ENCODE measurements at regions of chr12 and their contacts with region 1.

Region 1: GRCh38 chr12:53219968-53220800 is 11.8 kb downstream of the RARG start:
- DNase-seq: peak in 4 of 5 donors; percentile 54 to 74 (median 68)
- H3K4me3 ChIP-seq: peak overlapping the region; percentile 79
- H3K27ac ChIP-seq: peak overlapping the region; percentile 83 to 99
- H3K4me1 ChIP-seq: peaks cover 21% of the 10 kb centered on the region
- H3K27me3 ChIP-seq: no peaks in the 10 kb centered on the region
- CTCF ChIP-seq: no peak
- EP300 ChIP-seq: no peak
- POLR2A ChIP-seq: no peak

Region 2: DNA sequence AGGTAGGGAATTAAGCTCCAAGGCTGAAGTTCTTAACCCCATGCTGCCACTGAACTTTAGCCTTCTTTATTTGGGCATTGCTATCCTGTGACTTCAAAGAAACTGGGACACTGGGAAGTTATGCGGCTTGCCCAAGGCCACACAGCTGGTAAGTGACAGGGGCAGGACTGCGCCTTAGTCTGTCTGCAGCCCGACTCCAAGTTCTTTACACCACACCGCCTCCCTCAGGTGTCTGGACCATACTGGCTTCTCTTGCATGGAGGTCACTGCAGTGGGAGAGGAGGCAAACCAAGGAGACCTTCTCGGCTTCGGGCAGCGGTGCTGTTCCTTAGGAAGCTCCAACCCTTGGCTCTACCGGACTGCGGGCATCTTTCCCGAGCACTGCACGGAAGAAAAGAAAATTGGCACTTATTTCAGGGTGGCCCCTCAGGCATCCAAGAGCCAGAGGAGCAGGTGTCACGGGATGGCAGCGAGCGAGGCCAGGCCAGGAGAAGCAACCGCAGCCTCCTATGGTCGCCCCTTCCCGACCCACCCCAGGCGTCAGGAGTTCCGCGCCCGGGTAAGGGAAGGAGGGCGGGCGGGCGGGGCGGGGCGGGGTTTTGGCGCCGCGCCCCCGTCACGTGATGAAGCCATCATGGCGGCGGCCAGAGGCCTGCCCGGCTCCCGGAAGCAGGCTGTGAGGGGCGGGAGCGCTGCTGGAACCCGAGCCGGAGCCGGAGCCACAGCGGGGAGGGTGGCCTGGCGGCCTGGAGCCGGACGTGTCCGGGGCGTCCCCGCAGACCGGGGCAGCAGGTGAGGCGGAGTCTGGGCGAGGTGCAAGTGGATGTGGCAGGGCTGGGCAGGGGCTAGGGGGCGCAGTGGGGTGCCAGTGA is 31.5 kb after region 1 on chr12:
- intact Hi-C with region 1: loop called in 1 of 4 experiments (anchors 5 kb)
- DNase-seq: peak; percentile 73 to 87 (median 83)
- H3K4me3 ChIP-seq: peak overlapping the region; percentile 76
- H3K27ac ChIP-seq: peak overlapping the region; percentile 60 to 74
- H3K4me1 ChIP-seq: peaks cover 3% of the 10 kb centered on the region
- H3K27me3 ChIP-seq: no peaks in the 10 kb centered on the region
- CTCF ChIP-seq: peak in 2 of 3 donors; percentile 20 to 38
- EP300 ChIP-seq: no peak
- POLR2A ChIP-seq: peak; percentile 24